K562 (cell line): ENCODE measurements at regions of chr22 and their contacts with region 1.

Region 1: DNA sequence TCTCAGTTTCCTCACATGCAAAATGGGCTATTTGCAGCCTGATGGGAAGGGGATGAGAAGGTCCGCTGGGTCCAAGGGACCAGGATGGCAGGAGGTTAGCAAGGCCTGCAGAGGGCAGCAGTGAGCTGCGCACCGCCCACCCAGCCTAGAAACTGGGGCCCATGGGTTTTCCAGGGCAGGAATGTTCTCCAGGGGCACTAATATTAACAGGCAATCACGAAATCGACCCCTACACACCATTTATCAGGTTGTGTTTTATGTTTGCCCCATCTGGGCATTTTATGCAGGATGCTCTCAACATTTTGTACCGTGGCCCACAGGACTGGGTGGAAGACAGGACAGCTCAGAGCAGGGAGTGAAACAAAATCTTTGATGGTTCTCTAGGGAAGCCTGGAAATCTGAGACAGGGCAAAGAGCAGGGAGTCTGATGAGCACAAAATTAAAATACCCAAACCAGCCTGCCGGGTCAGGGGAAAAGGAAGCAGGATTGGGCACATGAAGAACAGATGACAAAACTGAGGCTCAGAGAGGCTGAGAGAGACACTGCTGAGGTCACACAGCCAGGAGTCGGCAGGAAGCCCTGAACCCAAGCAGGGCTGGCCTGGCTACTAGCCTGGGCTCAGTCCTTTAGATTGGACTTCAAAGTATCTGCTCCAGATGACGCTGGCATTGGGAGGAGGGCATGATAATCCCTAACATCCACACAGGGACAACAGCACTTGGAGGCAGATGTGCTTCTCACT is 1.6 kb upstream of the BCR start:
- DNase-seq: peak; percentile 69 to 100 (median 99)
- ATAC-seq: peak; percentile 57
- H3K4me3 ChIP-seq: no peak overlapping the region
- H3K27ac ChIP-seq: no peak overlapping the region
- H3K4me1 ChIP-seq: peaks cover 63 to 72% of the 10 kb centered on the region in 2 experiments
- H3K27me3 ChIP-seq: no peaks in the 10 kb centered on the region
- CTCF ChIP-seq: no peak
- EP300 ChIP-seq: no peak
- POLR2A ChIP-seq: no peak
- RAD21 ChIP-seq: no peak

Region 2: GRCh38 chr22:23144932-23145873 is 33.5 kb before region 1 on chr22 and contains the start of gene RAB36:
- CTCF ChIA-PET with region 1: no interaction called
- POLR2A ChIA-PET with region 1: interaction called, 3,476 read pairs
- in situ Hi-C with region 1: no loop called
- intact Hi-C with region 1: loop called (anchors 1 kb)
- DNase-seq: peak; percentile 60 to 100 (median 100)
- ATAC-seq: peak; percentile 90
- H3K4me3 ChIP-seq: no peak within 1 kb of the TSS
- H3K27ac ChIP-seq: no peak within 1 kb of the TSS
- H3K4me1 ChIP-seq: peaks cover 16 to 30% of the 10 kb centered on the region in 2 experiments
- H3K27me3 ChIP-seq: peaks cover 31 to 42% of the 10 kb centered on the region in 2 experiments
- CTCF ChIP-seq: no peak
- EP300 ChIP-seq: no peak
- POLR2A ChIP-seq: no peak
- RAD21 ChIP-seq: no peak
- polyA plus RNA-seq, gene RAB36: 0.04 to 0.08 TPM

Region 3: DNA sequence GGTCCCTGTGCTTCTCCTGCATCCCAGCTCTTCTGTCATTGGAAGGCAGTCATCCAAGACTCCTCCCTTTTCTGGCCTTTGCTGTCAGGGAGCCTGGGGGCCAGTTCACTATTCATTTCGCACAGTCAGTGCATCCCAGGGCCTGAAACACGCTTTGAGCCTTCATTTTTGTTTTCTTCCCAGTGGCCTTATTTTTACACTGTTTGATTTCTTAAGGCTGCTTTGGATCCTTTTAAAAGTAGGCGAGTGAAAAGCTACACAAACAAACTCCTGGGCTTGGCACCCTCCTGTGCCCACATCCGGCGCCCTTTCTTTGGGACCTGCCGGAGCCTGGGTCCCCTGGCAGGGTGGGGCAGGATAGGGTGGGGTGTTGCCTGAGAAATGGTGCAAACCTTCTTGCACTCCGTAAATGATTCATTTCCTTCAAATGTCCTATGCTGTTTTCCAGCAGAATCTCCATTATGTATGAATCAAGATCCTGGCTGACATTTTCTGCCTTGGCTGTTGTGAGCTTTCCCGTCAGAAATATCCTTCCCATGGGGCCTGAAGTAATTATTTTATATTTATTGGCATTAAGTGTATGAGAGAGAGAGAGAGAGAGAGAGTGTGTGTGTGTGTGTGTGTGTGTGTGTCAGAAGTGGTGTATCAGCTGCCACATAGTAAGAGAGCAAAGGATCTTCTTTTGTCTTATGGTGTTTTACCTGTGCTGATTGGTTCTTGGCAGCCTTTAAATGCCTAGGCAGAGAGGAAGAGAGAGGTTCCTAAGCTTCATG is 47.2 kb after region 1 on chr22:
- CTCF ChIA-PET with region 1: interaction called, 13 read pairs
- POLR2A ChIA-PET with region 1: interaction called, 3,476 read pairs
- in situ Hi-C with region 1: no loop called
- intact Hi-C with region 1: loop called (anchors 1 kb)
- DNase-seq: peak in 3 of 4 experiments; percentile 59 to 72 (median 59)
- ATAC-seq: no peak
- H3K4me3 ChIP-seq: no peak overlapping the region
- H3K27ac ChIP-seq: no peak overlapping the region
- H3K4me1 ChIP-seq: peaks cover 48 to 50% of the 10 kb centered on the region in 2 experiments
- H3K27me3 ChIP-seq: no peaks in the 10 kb centered on the region
- CTCF ChIP-seq: no peak
- EP300 ChIP-seq: no peak
- POLR2A ChIP-seq: no peak
- RAD21 ChIP-seq: no peak

Region 4: GRCh38 chr22:23248583-23248982 is 69.9 kb after region 1 on chr22:
- CTCF ChIA-PET with region 1: interaction called, 28 read pairs
- POLR2A ChIA-PET with region 1: interaction called, 114 read pairs
- in situ Hi-C with region 1: no loop called
- intact Hi-C with region 1: loop called (anchors 1 kb)
- DNase-seq: peak; percentile 61 to 83 (median 70)
- ATAC-seq: peak; percentile 44
- H3K4me3 ChIP-seq: no peak overlapping the region
- H3K27ac ChIP-seq: no peak overlapping the region
- H3K4me1 ChIP-seq: peaks cover 39 to 56% of the 10 kb centered on the region in 2 experiments
- H3K27me3 ChIP-seq: no peaks in the 10 kb centered on the region
- CTCF ChIP-seq: no peak
- EP300 ChIP-seq: no peak
- POLR2A ChIP-seq: no peak
- RAD21 ChIP-seq: no peak

Region 5: GRCh38 chr22:23263651-23264555 is 85.2 kb after region 1 on chr22:
- CTCF ChIA-PET with region 1: interaction called, 16 read pairs
- POLR2A ChIA-PET with region 1: interaction called, 237 read pairs
- in situ Hi-C with region 1: no loop called
- intact Hi-C with region 1: no loop called
- DNase-seq: peak in 2 of 4 experiments; percentile 58 to 60
- ATAC-seq: peak; percentile 7
- H3K4me3 ChIP-seq: no peak overlapping the region
- H3K27ac ChIP-seq: no peak overlapping the region
- H3K4me1 ChIP-seq: peaks cover 0 to 35% of the 10 kb centered on the region in 2 experiments; a peak in 1 of 5 replicates
- H3K27me3 ChIP-seq: no peaks in the 10 kb centered on the region
- CTCF ChIP-seq: no peak; a peak in 1 of 6 replicates
- EP300 ChIP-seq: no peak
- POLR2A ChIP-seq: no peak
- RAD21 ChIP-seq: no peak

Region 6: GRCh38 chr22:23281406-23282088 is 102.9 kb after region 1 on chr22:
- CTCF ChIA-PET with region 1: interaction called, 800 read pairs
- POLR2A ChIA-PET with region 1: interaction called, 237 read pairs
- in situ Hi-C with region 1: loop called (anchors 5 kb)
- intact Hi-C with region 1: loop called (anchors 1 kb)
- DNase-seq: peak; percentile 99 to 100 (median 100)
- ATAC-seq: peak; percentile 95
- H3K4me3 ChIP-seq: no peak overlapping the region
- H3K27ac ChIP-seq: no peak overlapping the region
- H3K4me1 ChIP-seq: peaks cover 0 to 27% of the 10 kb centered on the region in 2 experiments; a peak in 2 of 5 replicates
- H3K27me3 ChIP-seq: no peaks in the 10 kb centered on the region
- CTCF ChIP-seq: peak in 2 of 3 experiments; percentile 99 to 100; a peak in 4 of 6 replicates
- EP300 ChIP-seq: no peak
- POLR2A ChIP-seq: no peak
- RAD21 ChIP-seq: peak in 1 of 2 experiments; percentile 100; a peak in 2 of 4 replicates

Region 7: GRCh38 chr22:23437779-23438178 is 259.1 kb after region 1 on chr22:
- CTCF ChIA-PET with region 1: no interaction called
- POLR2A ChIA-PET with region 1: no interaction called
- in situ Hi-C with region 1: no loop called
- intact Hi-C with region 1: no loop called
- DNase-seq: no peak
- ATAC-seq: no peak
- H3K4me3 ChIP-seq: no peak overlapping the region
- H3K27ac ChIP-seq: no peak overlapping the region
- H3K4me1 ChIP-seq: peaks cover 0 to 13% of the 10 kb centered on the region in 2 experiments; a peak in 2 of 5 replicates
- H3K27me3 ChIP-seq: no peaks in the 10 kb centered on the region
- CTCF ChIP-seq: no peak
- EP300 ChIP-seq: no peak
- POLR2A ChIP-seq: no peak
- RAD21 ChIP-seq: no peak

Region 8: GRCh38 chr22:23539135-23539838 is 360.6 kb after region 1 on chr22:
- CTCF ChIA-PET with region 1: no interaction called
- POLR2A ChIA-PET with region 1: no interaction called
- in situ Hi-C with region 1: no loop called
- intact Hi-C with region 1: loop called (anchors 5 kb)
- DNase-seq: peak; percentile 43 to 82 (median 56)
- ATAC-seq: peak; percentile 95
- H3K4me3 ChIP-seq: no peak overlapping the region
- H3K27ac ChIP-seq: no peak overlapping the region
- H3K4me1 ChIP-seq: peaks cover 26 to 32% of the 10 kb centered on the region in 2 experiments
- H3K27me3 ChIP-seq: no peaks in the 10 kb centered on the region
- CTCF ChIP-seq: peak; percentile 81 to 98 (median 93)
- EP300 ChIP-seq: no peak
- POLR2A ChIP-seq: no peak
- RAD21 ChIP-seq: peak; percentile 89 to 96